ENCODE measurements at regions of chr4 and their contacts with region 1.

Region 1: DNA sequence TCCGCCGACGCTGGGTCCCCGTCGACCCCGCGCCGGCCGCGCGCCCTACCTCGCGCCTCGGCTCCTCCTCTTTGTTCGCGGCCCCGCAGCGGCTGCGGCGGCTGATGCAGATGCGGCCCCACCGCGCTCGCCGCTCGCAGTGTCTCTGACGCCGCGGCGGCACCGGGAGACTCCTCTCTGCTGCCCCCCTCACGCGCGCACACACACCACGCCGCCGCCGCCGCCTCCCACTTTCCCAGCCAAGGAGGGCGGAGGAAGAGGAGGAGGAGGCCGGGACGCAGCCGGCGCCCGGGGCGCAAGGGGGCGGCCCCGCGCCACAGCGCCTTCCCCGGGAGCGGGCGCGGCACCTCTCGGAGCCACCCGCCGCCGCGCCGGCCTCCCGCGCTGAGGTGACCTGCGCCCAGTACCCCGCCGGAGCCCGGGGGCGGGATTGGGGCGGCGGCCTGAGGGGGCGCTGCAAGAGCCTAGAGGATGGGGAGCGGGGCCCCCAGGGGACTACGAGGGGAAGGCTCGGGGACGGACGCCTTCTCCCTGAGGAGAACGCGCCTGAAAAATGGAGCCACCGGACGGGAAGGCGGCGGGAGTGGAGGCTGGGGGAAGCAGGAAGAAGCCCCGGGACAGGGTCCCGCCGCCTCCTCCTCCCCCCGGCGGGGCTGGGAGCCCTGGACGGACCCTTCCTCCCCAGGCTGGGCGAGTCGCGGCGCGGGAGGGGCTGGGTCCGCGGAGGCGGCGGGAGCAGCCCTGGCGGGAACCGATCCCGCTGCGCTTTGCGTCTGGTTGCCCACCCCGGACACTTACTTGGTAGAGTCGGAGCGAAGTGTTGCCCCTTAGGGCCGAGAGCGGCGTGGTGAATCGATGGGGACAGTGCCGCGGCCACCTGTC is at the start of gene SH3RF1:
- DNase-seq: peak; percentile 90
- total RNA-seq, gene SH3RF1: 15.6 TPM

Region 2: GRCh38 chr4:169010125-169011023 is 260.7 kb before region 1 on chr4 and contains the start of gene CBR4:
- intact Hi-C with region 1: loop called (anchors 5 kb)
- DNase-seq: peak; percentile 99
- total RNA-seq, gene CBR4: 21.3 TPM

Region 3: DNA sequence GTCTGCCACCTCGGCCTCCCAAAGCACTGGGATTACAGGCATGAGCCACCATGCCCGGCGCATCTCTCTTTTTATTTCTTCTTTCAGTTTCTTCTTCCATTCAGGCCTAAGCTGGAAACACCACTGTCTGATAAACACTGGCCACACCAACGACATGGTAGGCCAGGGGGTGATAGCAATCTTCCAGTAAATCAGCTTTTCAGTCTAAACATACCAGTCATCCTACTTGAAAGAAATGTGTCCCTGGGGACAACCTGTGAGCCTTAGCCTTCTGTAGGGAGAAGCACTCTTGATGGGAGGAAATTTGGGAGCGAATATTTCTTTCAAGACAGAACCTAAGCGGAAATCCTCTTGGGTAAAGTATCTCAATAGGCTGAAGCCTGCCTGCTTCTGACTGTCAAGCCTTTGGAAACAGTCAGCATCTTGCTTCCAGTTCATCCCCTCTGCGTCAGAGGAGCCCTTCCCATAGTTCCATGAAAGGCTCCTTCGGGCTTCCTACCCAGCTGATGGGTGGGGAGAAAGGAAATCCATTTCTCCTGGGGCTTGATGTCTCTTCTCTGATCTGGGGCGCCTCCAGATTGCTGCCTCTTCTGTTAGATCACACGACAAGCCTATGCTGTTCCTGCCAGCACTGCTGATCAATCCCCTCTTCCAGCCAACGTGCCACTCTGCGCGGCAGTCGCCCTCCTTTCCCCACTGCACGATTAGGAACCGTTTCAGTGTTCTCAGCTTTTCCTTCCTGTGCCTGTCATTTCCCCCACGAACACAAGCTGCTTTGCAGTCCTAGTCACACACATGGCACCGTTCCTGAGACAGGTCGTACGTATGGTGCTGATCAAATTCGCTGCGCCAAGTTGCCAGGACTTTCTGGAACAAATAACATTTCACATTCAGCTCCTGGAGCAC is 211.5 kb before region 1 on chr4:
- intact Hi-C with region 1: loop called (anchors 5 kb)
- DNase-seq: peak; percentile 64

Region 4: DNA sequence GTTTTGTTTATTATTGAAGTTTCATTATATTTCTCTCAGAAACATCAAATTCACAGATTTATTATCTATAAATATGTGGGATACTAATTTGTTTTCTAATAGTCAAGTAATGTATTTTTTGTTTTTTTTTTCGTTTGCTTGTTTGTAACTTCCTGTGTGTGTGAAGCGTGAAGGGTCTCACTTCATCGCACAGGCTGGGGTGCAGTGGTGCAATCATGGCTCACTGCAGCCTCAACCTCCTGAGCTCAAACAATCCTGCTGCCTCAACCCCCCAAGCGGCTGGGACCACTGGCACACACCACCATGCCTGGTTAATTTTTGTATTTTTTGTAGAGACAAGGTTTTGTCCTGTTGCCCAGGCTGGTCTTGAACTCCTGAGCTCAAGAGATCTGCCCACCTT is 55.4 kb before region 1 on chr4:
- intact Hi-C with region 1: no loop called
- DNase-seq: no peak

Region 5: DNA sequence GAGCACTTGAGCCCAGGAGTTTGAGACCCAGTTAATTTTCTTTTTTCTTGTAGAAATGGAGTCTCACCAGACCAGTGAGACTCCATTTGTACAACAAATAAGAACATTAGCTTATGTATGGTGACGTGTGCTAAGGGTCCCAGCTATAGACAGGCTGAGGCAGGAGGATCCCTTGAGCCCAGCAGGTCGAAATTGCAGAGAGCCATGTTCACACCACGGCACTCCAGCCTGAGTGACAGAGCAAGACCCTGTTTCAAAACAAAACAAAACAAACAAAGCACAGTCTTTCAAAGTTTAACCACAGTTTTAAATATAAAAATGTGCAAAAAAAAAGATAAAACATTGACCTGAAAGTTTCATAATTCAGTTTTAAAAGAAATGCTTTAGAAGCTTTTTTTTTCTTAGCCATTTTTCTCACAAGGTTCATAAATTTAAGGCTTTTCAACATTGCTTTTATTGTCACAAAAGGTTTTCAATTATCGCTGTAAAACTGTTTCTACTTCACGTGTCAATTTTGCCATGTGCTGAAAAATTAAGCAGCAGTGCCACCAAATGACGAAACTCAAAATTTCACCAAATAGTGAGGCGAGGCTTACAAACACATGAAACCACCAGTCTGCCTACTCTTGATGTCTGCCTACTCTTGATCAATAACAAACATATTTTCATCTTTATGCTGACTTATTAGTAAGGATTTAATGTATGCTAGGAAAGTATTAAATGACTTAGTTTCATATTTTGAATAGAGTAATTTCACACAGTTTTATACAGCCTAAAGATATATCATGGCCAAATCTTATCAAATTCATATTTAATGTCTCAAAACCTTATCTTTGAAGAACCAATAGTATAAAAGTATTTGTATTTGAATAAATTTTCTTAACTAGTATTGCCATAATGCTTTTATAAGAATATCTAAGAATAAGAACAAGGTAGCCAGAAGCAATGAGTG is 215.0 kb after region 1 on chr4:
- intact Hi-C with region 1: loop called (anchors 5 kb)
- DNase-seq: no peak

Measured in cardiac septum (tissue), 1 donor.